SK-N-SH (cell line): ENCODE measurements at regions of chr12 and their contacts with region 1.

Region 1: DNA sequence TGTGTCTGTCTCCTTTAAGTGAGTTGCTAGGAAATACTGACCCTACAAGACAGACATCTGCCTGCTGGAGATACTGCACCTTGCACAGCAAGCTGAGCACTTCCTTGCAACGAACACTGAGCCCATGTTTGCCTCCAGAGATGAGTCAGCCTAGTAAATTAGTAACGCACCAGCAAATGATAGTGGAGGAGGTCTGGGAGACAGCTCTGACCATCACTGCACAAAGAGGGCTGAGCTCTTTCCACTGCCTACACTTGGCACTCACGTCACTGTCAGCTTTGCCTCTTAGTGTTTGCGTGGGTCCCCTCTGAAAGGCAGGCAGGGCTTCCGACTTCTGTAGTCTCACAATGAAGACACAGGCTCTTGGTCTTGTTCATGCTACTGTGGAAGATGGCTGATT is 109.0 kb downstream of the APAF1 start:
- DNase-seq: no peak
- H3K4me3 ChIP-seq: no peak overlapping the region
- H3K27ac ChIP-seq: no peak overlapping the region
- H3K4me1 ChIP-seq: peaks cover 0 to 14% of the 10 kb centered on the region in 2 experiments; a peak in 1 of 4 replicates
- H3K27me3 ChIP-seq: no peaks in the 10 kb centered on the region
- CTCF ChIP-seq: no peak
- EP300 ChIP-seq: no peak
- RAD21 ChIP-seq: no peak

Region 2: DNA sequence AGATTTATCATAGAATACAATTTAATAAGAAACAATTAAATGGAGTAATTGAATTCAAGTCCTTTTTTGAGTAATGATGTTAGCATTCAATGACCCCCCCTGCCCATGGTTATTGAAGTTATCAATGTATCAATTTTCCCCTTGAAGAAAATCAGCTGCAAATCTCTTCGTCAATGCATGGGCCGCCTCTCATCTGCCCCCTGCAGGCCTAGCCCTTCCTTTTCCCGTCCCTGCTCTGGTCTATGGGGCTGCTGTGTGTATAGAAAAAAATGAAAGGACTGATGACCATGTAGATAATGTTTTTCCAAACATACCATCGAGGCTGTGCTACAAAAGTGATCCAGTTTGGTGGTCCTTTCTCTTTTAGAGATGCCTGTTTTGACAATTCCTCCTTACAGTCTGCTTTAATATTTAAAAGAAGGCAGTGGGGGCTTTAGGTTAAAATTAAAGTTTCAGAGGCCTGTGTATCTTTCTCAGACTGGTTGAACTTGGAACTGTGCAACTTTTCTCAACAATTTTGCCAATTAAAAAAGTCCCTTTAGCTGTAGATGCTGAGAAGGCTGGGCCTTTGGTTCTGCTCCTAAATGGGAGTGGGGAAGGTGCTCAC is 10.6 kb before region 1 on chr12:
- CTCF ChIA-PET with region 1: interaction called, 10 read pairs
- POLR2A ChIA-PET with region 1: no interaction called
- DNase-seq: peak; percentile 68
- H3K4me3 ChIP-seq: no peak overlapping the region; a peak in 1 of 4 replicates
- H3K27ac ChIP-seq: no peak overlapping the region
- H3K4me1 ChIP-seq: peaks cover 0 to 8% of the 10 kb centered on the region in 2 experiments; a peak in 2 of 4 replicates
- H3K27me3 ChIP-seq: no peaks in the 10 kb centered on the region
- CTCF ChIP-seq: peak; percentile 60
- EP300 ChIP-seq: no peak
- RAD21 ChIP-seq: peak; percentile 49